AG04449 (cell line): ENCODE measurements at regions of chr1 and their contacts with region 1.

Region 1: DNA sequence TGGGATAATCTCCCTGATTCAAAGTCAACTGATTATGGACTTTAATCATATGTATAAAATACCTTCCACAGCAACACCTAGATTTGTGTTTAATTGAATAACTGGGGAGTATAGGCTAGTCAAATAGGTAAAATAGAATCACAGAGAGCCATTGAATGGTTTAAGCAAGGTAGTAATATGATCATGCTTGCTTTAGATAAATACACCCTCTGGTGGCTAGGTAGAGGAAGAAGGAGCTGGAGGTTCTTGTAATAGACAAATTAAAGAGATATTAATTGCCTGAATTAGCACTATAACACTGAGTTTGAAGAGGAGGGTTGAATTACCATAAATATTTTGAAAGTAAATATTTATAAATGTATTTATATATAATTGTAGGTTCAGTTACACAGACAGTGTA is 40.3 kb downstream of the DIRAS3 start:
- DNase-seq: no peak
- H3K4me3 ChIP-seq: no peak overlapping the region
- CTCF ChIP-seq: peak; percentile 24

Region 2: DNA sequence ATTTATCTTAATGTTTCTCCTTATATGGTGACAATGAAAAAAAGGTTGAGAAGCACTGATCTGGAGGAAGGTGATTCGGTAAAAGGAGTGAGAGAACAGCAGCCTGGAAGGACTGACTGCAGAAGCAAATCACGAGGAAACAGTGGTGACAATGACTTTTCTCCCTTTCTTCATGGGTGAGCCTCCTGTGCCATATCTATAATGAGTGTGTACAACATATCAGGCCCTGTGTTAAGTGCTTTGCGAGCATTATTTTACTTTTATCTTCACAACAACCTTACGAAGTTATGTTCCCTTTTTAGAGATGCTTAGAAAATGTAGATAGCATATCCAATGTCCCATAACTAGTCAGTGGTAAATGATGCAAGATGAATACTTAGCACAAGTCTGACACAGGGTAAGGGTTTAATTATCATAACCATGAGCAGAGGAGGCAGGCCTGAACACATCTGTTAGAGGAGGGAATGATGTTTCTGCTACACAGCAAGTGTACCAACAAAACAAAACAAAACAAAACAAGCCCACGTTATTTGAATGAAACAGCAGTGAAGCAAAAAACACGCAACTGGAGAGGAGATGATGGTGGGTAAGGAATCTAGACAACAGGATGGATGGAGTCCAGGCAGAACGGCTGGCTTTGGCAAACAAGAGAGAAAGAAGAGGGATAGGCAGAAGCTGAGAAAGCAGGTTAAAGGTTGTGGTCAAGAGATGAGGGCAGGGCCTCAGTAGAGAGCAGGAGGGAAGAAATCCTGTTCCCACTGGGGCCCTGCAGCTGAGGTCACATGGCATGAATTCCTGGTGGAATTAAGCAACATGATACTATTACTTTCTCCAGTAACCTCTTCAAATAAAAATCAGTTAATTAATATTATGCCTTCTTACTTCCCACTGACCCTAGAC is 206.5 kb before region 1 on chr1:
- CTCF ChIA-PET with region 1: no interaction called
- POLR2A ChIA-PET with region 1: no interaction called
- DNase-seq: no peak
- H3K4me3 ChIP-seq: no peak overlapping the region
- CTCF ChIP-seq: no peak

Region 3: DNA sequence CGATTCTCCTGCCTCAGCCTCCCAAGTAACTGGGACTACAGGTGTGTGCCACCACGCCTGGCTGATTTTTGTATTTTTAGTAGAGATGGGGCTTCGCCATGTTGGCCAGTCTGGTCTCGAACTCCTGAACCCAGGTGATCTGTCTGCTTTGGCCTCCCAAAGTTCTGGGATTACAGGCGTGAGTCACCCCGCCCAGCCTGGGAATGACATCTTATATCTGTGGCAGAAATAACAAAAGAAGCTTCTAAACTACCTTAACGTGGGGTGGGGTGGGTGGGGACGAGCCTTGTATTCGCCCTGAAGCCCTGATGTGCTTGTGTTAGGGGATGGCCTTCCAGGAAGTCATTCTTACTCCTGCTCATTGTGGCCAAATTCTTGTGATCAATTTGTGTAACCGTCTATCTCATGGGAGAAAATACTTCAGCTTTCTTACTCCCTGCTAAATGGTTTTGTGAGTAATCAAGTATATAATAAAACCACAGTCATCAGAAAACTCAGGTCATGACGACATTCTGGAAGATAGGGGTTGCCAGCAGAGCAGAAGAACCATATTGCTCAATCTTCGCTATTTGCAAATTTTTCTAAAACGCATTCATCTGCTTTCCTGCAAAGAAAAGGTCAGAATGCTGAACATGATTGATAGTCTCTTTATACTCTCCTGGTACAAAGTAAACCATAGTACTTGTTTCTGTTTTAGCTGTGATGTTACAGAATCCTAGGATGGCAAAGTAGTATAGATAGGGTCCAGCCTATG is 22.9 kb before region 1 on chr1:
- CTCF ChIA-PET with region 1: interaction called, 13 read pairs
- POLR2A ChIA-PET with region 1: no interaction called
- DNase-seq: peak; percentile 93
- H3K4me3 ChIP-seq: no peak overlapping the region
- CTCF ChIP-seq: no peak

Region 4: GRCh38 chr1:67997746-67998145 is 12.3 kb before region 1 on chr1:
- CTCF ChIA-PET with region 1: interaction called, 25 read pairs
- POLR2A ChIA-PET with region 1: no interaction called
- DNase-seq: no peak
- H3K4me3 ChIP-seq: no peak overlapping the region
- CTCF ChIP-seq: no peak

Region 5: GRCh38 chr1:68145418-68146126 is 135.5 kb after region 1 on chr1:
- CTCF ChIA-PET with region 1: no interaction called
- POLR2A ChIA-PET with region 1: no interaction called
- DNase-seq: no peak
- H3K4me3 ChIP-seq: no peak overlapping the region
- CTCF ChIP-seq: no peak